Common myeloid progenitor, CD34-positive (primary cell): ENCODE measurements at regions of chr10 and their contacts with region 1.

Region 1: DNA sequence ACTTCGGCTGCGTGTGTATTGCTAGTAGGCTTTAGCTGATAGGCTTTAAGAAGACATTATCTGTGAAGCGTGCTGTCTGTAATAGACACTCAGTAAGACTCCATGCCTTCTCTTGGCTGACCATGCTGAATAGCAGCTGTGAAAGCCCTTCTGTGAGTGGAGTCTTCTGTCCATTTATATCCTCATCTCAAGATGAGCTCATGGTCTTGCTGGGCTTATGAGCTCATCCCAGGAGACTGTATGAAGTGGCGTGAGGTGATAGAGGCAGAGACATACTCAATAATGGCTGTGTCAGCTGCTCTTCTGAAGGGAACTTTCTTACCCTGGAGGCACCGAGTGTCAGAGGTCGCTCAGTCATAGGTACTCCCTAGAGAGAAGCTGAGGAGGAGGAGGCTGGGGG is 111.5 kb downstream of the SH2D4B start:
- DNase-seq: no peak
- H3K4me3 ChIP-seq: no peak overlapping the region
- H3K27ac ChIP-seq: no peak overlapping the region
- H3K4me1 ChIP-seq: no peaks in the 10 kb centered on the region
- H3K27me3 ChIP-seq: peaks cover 0 to 5% (median 0%) of the 10 kb centered on the region in 5 experiments

Region 2: DNA sequence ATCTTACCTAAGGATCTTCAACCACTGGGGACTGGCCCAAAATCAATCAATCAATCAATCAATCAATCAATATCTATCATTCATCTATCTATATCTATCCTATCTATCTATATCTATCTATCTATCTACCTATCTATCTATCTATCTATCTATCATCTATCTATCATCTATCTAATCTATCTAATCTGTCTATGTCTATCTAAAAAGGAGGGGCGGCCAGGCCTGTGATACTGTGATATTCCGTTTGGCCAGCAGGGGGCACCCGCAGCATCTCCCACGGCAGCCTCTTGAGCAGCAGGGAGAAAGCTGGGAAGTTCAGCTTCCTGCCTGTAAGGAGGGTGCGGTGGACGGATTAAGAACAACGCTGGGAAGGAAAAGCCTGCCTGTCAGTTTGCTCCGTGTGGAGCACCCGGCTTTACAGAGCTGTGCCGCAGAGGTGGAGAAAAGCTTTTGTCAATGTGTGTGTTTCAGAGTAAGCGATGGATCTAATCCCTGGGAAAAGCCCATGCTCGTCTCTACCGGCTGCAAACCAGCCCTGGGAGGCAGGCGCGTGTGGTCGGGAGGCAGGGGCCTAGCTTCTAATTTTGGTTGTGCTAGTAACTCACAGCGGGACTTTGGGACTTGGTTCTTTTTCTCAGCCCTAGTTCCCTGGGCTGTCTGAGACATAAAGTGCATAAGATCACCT is 13.5 kb after region 1 on chr10:
- CTCF ChIA-PET with region 1: interaction called, 21 read pairs
- POLR2A ChIA-PET with region 1: no interaction called
- DNase-seq: peak; percentile 44 to 63 (median 61)
- H3K4me3 ChIP-seq: peak overlapping the region in 6 of 7 experiments; percentile 42 to 79 (median 56)
- H3K27ac ChIP-seq: no peak overlapping the region
- H3K4me1 ChIP-seq: peaks cover 7 to 23% (median 19%) of the 10 kb centered on the region in 4 experiments
- H3K27me3 ChIP-seq: no peaks in the 10 kb centered on the region

Region 3: DNA sequence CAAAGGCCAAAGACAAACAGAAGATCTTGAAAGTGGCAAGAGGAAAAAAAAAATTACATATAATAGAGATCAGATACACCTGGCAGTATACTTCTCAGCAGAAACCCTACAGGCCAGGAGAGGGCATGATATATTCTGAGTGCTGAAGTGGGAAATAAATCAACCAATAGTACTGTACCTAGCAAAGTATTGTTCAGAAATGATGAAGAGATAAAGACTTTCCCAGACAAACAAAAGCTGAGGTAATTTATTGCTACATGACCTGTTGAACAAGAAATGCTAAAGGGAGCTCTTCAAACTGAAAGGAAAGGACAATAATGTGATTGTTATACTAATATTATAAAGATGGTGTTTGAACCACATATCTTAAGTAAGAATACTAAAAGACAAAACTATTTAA is 180.4 kb after region 1 on chr10:
- CTCF ChIA-PET with region 1: no interaction called
- POLR2A ChIA-PET with region 1: no interaction called
- DNase-seq: no peak
- H3K4me3 ChIP-seq: no peak overlapping the region
- H3K27ac ChIP-seq: no peak overlapping the region
- H3K4me1 ChIP-seq: no peaks in the 10 kb centered on the region
- H3K27me3 ChIP-seq: no peaks in the 10 kb centered on the region